Activated CD4-positive, alpha-beta memory T cell treated with anti-CD3 and anti-CD28 coated beads for 36 hours (primary cell): ENCODE measurements at regions of chr1 and their contacts with region 1.

Region 1: DNA sequence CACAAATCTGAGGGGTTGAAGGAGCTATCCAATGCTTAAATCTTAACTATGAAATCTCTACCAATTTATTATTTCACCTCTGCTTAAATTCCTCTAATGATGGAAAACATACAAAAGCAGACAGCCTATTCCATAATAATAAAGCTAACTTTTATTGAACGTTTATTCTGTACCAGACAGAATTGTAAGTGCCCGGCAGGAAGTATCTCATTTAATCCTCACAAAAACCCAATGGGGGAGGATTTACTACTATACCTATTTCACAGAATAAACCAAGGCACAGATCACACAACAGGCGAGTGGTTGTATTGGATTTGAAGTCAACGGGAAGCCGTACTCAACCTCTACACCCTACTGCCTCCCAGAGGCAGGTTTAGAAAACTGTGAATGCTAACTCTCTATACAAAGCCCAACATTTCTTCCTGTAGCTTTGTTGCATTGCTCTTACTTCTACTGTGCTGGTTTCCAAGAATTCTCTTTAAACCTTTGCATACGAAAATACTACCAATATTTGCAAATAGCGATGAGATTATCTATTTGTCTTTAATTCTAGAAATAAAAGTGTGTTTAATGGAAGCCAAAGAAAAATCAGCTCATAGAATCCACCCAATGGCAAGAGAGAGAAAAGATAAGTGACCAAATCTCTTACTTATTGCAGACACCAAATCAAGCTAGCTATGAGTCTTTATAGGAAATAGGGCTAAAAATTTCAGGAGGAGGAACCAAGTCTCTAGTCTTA is 33.5 kb upstream of the C1orf53 start:
- DNase-seq: peak; percentile 50
- H3K4me3 Mint-ChIP-seq: no peak overlapping the region
- H3K27ac Mint-ChIP-seq: no peak overlapping the region
- H3K4me1 Mint-ChIP-seq: no peaks in the 10 kb centered on the region
- H3K27me3 Mint-ChIP-seq: no peaks in the 10 kb centered on the region

Region 2: GRCh38 chr1:197526736-197527371 is 342.1 kb before region 1 on chr1:
- CTCF ChIA-PET with region 1: interaction called, 46 read pairs
- POLR2A ChIA-PET with region 1: no interaction called
- intact Hi-C with region 1: loop called (anchors 1 kb)
- DNase-seq: no peak
- H3K4me3 Mint-ChIP-seq: no peak overlapping the region
- H3K27ac Mint-ChIP-seq: no peak overlapping the region
- H3K4me1 Mint-ChIP-seq: no peaks in the 10 kb centered on the region
- H3K27me3 Mint-ChIP-seq: no peaks in the 10 kb centered on the region

Region 3: GRCh38 chr1:197614916-197615692 is 253.8 kb before region 1 on chr1:
- CTCF ChIA-PET with region 1: interaction called, 146 read pairs
- POLR2A ChIA-PET with region 1: interaction called, 3 read pairs
- intact Hi-C with region 1: loop called (anchors 1 kb)
- DNase-seq: peak; percentile 38
- H3K4me3 Mint-ChIP-seq: no peak overlapping the region
- H3K27ac Mint-ChIP-seq: no peak overlapping the region
- H3K4me1 Mint-ChIP-seq: peaks cover 1% of the 10 kb centered on the region
- H3K27me3 Mint-ChIP-seq: no peaks in the 10 kb centered on the region

Region 4: GRCh38 chr1:197692965-197693364 is 176.0 kb before region 1 on chr1:
- CTCF ChIA-PET with region 1: interaction called, 6 read pairs
- POLR2A ChIA-PET with region 1: no interaction called
- intact Hi-C with region 1: loop called (anchors 5 kb)
- DNase-seq: no peak
- H3K4me3 Mint-ChIP-seq: no peak overlapping the region
- H3K27ac Mint-ChIP-seq: no peak overlapping the region
- H3K4me1 Mint-ChIP-seq: peaks cover 34% of the 10 kb centered on the region
- H3K27me3 Mint-ChIP-seq: no peaks in the 10 kb centered on the region